CD8-positive, alpha-beta T cell (primary cell): ENCODE measurements at regions of chr1 and their contacts with region 1.

Region 1: DNA sequence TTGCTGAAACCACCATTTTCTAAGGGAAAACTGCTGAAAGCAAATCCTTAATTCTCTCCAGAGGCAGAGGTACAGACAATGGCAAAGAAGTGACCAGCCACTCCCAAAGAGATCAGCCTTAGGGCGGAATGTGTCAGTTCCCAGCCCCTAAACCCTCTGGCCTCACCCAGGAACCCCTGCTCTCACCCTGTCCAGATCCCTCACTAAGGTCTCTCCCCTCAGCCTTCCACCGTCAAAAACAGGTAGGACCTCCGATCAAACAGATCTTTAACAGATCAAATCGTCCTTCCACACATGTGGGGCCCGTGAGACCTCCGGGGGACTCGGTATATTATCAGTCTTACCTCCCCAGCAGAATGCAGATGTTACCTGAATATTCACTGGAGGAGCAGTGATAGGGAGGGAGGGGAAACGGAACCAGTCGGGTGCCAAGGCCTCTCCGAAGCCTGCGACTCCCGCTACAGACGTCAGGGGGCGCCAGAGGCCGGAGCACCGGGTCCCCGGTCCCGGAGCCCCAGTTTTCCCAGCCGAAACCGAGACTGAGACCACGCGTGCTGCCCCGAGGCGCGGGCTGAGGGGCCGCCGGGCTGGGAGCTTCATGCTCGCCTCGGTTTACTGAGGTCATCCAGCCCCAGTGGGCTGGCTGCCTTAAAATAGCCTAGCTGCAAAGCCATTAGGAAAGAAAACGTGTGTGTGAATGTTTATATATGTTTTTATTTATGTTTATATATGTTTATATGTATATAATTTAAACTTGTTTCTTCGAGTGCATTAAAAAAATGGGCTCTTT is 23.6 kb downstream of the GPA33 start:
- DNase-seq: peak; percentile 59 to 92 (median 80)
- ATAC-seq: peak; percentile 99
- H3K4me3 ChIP-seq: peak overlapping the region in 1 of 2 experiments; percentile 27
- H3K4me3 Mint-ChIP-seq: no peak overlapping the region
- H3K27ac ChIP-seq: no peak overlapping the region
- H3K27ac Mint-ChIP-seq: no peak overlapping the region
- H3K4me1 ChIP-seq: no peaks in the 10 kb centered on the region
- H3K4me1 Mint-ChIP-seq: no peaks in the 10 kb centered on the region
- H3K27me3 ChIP-seq: no peaks in the 10 kb centered on the region
- H3K27me3 Mint-ChIP-seq: no peaks in the 10 kb centered on the region
- CTCF ChIP-seq: peak; percentile 96

Region 2: DNA sequence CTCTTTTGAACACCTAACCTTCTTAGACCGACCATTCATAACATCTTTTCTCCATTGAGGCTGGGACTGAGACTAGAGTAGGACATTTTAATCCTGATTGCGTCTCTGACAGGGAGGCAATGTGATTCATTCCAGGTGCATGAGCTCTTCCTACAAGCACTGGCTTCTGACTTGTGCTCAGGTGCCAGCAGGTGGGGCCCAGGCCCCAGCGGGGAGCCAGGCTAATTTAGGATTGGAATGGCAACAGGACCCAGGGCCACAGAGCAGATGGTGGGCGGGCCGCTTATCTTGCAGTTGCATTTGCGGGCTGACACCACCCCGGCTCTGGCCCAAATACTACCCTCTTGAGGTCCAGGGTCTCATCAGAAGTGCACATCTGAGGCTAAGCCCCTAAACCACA is 19.5 kb after region 1 on chr1:
- CTCF ChIA-PET with region 1: interaction called, 14 read pairs
- POLR2A ChIA-PET with region 1: interaction called, 4 read pairs
- intact Hi-C with region 1: no loop called
- DNase-seq: no peak
- ATAC-seq: no peak
- H3K4me3 ChIP-seq: no peak overlapping the region
- H3K4me3 Mint-ChIP-seq: no peak overlapping the region
- H3K27ac ChIP-seq: no peak overlapping the region
- H3K27ac Mint-ChIP-seq: no peak overlapping the region
- H3K4me1 ChIP-seq: peaks cover 27% of the 10 kb centered on the region
- H3K4me1 Mint-ChIP-seq: peaks cover 36% of the 10 kb centered on the region
- H3K27me3 ChIP-seq: no peaks in the 10 kb centered on the region
- H3K27me3 Mint-ChIP-seq: no peaks in the 10 kb centered on the region
- CTCF ChIP-seq: no peak

Region 3: DNA sequence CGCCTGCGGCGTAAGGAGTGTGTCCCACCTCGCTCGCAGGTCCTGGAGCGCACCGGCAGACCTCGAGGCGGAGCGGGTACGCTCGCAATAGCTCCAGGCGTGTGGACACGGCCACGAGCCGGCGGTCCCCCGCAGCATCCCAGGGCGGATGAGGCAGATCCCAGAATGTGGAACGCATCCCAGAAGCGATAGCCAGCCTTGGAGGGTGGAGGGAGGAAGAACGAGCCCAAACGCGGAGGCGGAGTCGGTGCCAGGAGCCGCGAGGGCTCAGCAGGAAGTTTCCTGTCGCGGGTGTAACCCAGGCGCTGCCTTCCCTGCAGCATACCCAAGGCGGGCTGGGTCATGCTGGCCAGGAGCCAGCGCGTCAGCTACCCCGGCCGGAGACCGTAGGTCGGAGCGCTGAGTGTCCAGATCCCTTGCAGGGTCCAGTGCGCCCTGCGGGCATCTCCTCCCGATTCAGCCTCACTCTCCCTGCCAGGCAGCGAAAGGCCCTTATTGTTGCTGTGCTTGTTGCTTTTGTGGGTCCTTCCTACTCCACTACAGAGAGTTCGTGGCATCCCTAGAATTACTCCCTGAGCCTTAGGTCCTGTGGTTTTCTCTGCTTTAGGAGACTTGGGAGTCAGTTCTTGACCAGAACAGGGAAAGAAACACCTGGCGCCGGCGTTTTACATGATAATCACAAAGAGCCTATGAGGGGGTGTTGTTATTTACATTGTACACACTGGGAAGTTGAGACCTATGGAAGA is 55.0 kb after region 1 on chr1:
- CTCF ChIA-PET with region 1: interaction called, 436 read pairs
- POLR2A ChIA-PET with region 1: no interaction called
- intact Hi-C with region 1: loop called (anchors 1 kb)
- DNase-seq: peak in 7 of 9 experiments; percentile 11 to 72 (median 40)
- ATAC-seq: peak; percentile 67
- H3K4me3 ChIP-seq: peak overlapping the region; percentile 56 to 72
- H3K4me3 Mint-ChIP-seq: peak overlapping the region; percentile 86
- H3K27ac ChIP-seq: no peak overlapping the region
- H3K27ac Mint-ChIP-seq: no peak overlapping the region
- H3K4me1 ChIP-seq: no peaks in the 10 kb centered on the region
- H3K4me1 Mint-ChIP-seq: peaks cover 6% of the 10 kb centered on the region
- H3K27me3 ChIP-seq: peaks cover 0 to 4% of the 10 kb centered on the region in 2 experiments
- H3K27me3 Mint-ChIP-seq: peaks cover 7% of the 10 kb centered on the region
- CTCF ChIP-seq: no peak

Region 4: GRCh38 chr1:167270349-167271092 is 204.0 kb after region 1 on chr1:
- CTCF ChIA-PET with region 1: interaction called, 5 read pairs
- POLR2A ChIA-PET with region 1: no interaction called
- intact Hi-C with region 1: loop called (anchors 5 kb)
- DNase-seq: no peak
- ATAC-seq: no peak
- H3K4me3 ChIP-seq: no peak overlapping the region
- H3K4me3 Mint-ChIP-seq: no peak overlapping the region
- H3K27ac ChIP-seq: no peak overlapping the region
- H3K27ac Mint-ChIP-seq: no peak overlapping the region
- H3K4me1 ChIP-seq: peaks cover 9% of the 10 kb centered on the region
- H3K4me1 Mint-ChIP-seq: peaks cover 43% of the 10 kb centered on the region
- H3K27me3 ChIP-seq: no peaks in the 10 kb centered on the region
- H3K27me3 Mint-ChIP-seq: no peaks in the 10 kb centered on the region
- CTCF ChIP-seq: no peak

Region 5: GRCh38 chr1:167401260-167401873 is 334.8 kb after region 1 on chr1:
- CTCF ChIA-PET with region 1: no interaction called
- POLR2A ChIA-PET with region 1: no interaction called
- intact Hi-C with region 1: loop called in 1 of 2 experiments (anchors 2 kb)
- DNase-seq: peak; percentile 4 to 79 (median 51)
- ATAC-seq: peak; percentile 73
- H3K4me3 ChIP-seq: no peak overlapping the region
- H3K4me3 Mint-ChIP-seq: no peak overlapping the region
- H3K27ac ChIP-seq: no peak overlapping the region
- H3K27ac Mint-ChIP-seq: no peak overlapping the region
- H3K4me1 ChIP-seq: no peaks in the 10 kb centered on the region
- H3K4me1 Mint-ChIP-seq: peaks cover 5% of the 10 kb centered on the region
- H3K27me3 ChIP-seq: no peaks in the 10 kb centered on the region
- H3K27me3 Mint-ChIP-seq: no peaks in the 10 kb centered on the region
- CTCF ChIP-seq: peak; percentile 36

Region 6: DNA sequence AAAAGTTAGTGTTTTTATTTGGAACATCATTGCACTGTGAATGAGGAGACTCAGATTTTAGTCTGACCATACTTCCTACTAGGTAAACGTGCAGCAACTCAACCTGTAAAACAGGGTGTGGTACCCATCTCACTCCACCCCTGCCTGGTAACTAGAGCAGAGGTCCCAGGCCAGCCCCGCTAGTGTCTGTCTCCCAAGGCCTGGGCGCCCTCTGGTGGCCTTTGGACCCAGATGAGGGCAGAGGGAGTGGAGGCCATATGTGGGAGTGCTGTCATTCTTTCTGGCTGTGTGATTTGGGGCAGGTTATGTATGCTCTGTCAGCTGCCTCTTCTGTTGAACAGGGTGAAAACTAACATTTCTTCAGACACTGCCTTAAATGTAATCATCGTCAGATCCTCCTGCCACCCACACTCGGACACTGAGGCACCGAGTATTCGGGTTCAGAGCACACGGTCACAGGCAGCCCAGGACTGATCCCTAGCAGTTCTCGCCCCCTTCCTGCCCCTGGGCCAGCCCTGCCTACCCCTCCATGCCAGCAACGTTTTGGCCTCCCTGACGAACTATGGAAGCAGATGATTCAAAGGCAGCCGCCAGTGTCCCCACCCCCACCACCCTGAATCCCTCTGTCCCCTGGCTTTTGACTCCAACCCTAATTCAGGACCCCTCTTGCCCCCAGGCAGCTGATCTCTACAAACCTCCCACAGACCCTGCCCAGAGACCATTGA is 375.8 kb after region 1 on chr1:
- CTCF ChIA-PET with region 1: no interaction called
- POLR2A ChIA-PET with region 1: no interaction called
- intact Hi-C with region 1: loop called (anchors 2 kb)
- DNase-seq: peak; percentile 78 to 91 (median 89)
- ATAC-seq: peak; percentile 80
- H3K4me3 ChIP-seq: no peak overlapping the region
- H3K4me3 Mint-ChIP-seq: no peak overlapping the region
- H3K27ac ChIP-seq: peak overlapping the region in 1 of 2 experiments; percentile 71
- H3K27ac Mint-ChIP-seq: peak overlapping the region; percentile 85
- H3K4me1 ChIP-seq: peaks cover 81% of the 10 kb centered on the region
- H3K4me1 Mint-ChIP-seq: peaks cover 91% of the 10 kb centered on the region
- H3K27me3 ChIP-seq: no peaks in the 10 kb centered on the region
- H3K27me3 Mint-ChIP-seq: no peaks in the 10 kb centered on the region
- CTCF ChIP-seq: peak; percentile 75

Region 7: GRCh38 chr1:167553136-167554027 is 486.9 kb after region 1 on chr1 and contains the start of gene CREG1:
- CTCF ChIA-PET with region 1: interaction called, 9 read pairs
- POLR2A ChIA-PET with region 1: no interaction called
- intact Hi-C with region 1: loop called (anchors 5 kb)
- DNase-seq: peak; percentile 70 to 93 (median 88)
- ATAC-seq: peak; percentile 97
- H3K4me3 ChIP-seq: peak within 1 kb of the TSS; percentile 62 to 70
- H3K4me3 Mint-ChIP-seq: peak within 1 kb of the TSS; percentile 88
- H3K27ac ChIP-seq: peak within 1 kb of the TSS in 1 of 2 experiments; percentile 57
- H3K27ac Mint-ChIP-seq: no peak within 1 kb of the TSS
- H3K4me1 ChIP-seq: peaks cover 18% of the 10 kb centered on the region
- H3K4me1 Mint-ChIP-seq: peaks cover 47% of the 10 kb centered on the region
- H3K27me3 ChIP-seq: no peaks in the 10 kb centered on the region
- H3K27me3 Mint-ChIP-seq: no peaks in the 10 kb centered on the region
- CTCF ChIP-seq: no peak
- total RNA-seq, gene CREG1: 9.3 to 9.8 TPM